ENCODE measurements at regions of chr7 and their contacts with region 1.

Region 1: GRCh38 chr7:44847508-44847920 is 373 bp downstream of the H2AZ2 start:
- DNase-seq: peak; percentile 81
- H3K4me3 Mint-ChIP-seq: peak overlapping the region; percentile 90
- H3K27ac Mint-ChIP-seq: peak overlapping the region; percentile 98
- H3K4me1 Mint-ChIP-seq: peaks cover 54% of the 10 kb centered on the region
- H3K27me3 Mint-ChIP-seq: no peaks in the 10 kb centered on the region

Region 2: GRCh38 chr7:44534501-44534900 is 313.0 kb before region 1 on chr7:
- intact Hi-C with region 1: no loop called
- DNase-seq: peak; percentile 28
- H3K4me3 Mint-ChIP-seq: no peak overlapping the region
- H3K27ac Mint-ChIP-seq: no peak overlapping the region
- H3K4me1 Mint-ChIP-seq: no peaks in the 10 kb centered on the region
- H3K27me3 Mint-ChIP-seq: no peaks in the 10 kb centered on the region

Region 3: GRCh38 chr7:44573464-44574286 is 273.8 kb before region 1 on chr7 and contains the start of gene DDX56:
- intact Hi-C with region 1: loop called (anchors 1 kb)
- DNase-seq: peak; percentile 93
- H3K4me3 Mint-ChIP-seq: peak within 1 kb of the TSS; percentile 88
- H3K27ac Mint-ChIP-seq: peak within 1 kb of the TSS; percentile 95
- H3K4me1 Mint-ChIP-seq: peaks cover 32% of the 10 kb centered on the region
- H3K27me3 Mint-ChIP-seq: no peaks in the 10 kb centered on the region
- total RNA-seq, gene DDX56: 165 and 166 TPM in 2 replicates

Region 4: DNA sequence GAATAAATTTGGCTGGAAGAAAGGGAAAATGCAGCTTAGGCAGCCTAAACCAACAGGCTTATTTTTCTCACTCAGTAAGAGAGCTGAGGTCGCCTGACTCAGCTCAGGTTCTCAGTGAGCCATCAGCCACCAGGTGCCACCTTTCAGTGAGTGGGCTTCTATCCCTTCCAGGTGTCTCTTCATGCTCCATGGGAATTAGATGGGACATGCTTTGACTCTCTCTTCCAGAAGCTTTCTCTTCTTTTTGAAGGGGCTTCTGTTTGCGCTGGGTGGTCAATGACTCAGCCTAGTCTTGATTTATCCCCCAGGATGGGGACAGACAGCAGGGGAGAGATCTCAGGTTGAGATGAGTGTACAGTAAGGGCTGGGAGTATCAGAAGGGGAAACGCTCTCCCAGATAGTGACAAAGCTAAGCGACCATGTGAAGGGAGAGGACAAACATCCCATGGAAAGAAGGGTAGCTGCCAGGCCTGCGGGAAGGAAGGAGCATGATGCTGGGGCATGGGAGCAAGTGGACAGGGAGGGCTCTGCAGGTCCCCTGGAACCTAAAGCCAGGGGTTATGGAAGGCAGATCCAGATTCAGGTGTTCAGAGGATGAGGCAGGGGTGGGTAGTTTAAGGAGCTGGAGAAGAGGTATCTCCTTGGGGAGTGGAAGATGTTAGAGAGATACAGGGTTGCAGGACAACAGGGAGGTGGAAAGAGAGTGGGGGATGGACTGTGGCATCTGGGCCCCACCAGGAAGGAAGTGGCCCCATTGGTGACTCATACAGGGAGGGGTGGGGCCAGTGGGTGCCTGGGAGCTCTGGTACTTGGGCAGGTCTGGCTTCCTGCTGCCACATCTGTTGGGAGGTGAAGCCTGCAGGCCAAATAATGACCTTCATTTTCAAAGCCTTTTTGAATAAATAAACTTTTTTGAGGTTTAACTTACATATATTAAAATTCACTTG is 208.6 kb before region 1 on chr7:
- intact Hi-C with region 1: loop called (anchors 1 kb)
- DNase-seq: peak; percentile 84
- H3K4me3 Mint-ChIP-seq: peak overlapping the region; percentile 82
- H3K27ac Mint-ChIP-seq: peak overlapping the region; percentile 100
- H3K4me1 Mint-ChIP-seq: peaks cover 81% of the 10 kb centered on the region
- H3K27me3 Mint-ChIP-seq: no peaks in the 10 kb centered on the region

Region 5: DNA sequence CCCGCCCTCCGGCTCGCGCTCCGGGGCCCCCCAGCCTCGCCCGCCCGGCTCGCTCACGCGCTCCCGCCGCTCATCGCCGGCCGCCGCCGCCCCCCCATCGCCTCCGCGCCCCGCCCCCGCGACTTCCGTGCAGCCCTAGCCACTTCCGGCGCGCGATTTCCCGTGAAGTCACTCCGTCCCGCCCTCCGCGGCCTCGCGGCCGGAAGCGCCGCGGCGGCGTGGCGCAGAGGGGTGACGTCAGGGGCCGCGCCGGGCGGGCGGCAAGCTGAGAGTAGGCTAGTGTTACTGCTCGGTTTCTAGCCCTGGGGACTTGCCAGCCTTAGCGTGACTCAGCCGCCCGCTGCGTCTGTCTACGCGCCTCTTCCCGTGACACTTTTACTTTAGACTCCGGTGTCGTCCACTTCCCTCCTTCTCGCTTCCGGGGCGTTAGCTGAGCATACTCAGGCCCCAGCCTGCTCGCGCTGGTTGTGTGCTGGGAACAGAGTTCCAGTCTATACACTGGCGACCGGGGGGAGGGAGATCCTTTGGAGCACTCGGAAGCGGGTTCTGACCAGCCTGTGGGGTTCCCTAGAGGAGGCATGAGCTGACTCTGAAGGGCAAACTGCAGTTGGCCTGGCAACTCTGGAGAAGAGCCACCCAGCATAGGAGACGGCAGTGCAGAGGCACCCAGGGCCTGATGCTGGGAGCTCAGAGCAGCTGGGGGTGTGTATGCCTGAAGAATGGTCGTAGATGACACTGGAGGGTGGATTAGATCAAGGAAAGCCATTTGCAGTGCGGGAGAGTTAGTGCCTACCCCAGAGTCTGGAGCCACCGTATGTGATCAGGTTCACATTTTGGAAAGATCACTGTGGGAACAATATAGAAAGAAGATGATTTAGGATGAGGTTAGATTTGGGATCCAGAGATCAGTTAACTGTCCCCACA is 38.1 kb after region 1 on chr7 and contains the start of gene PURB:
- intact Hi-C with region 1: loop called (anchors 1 kb)
- DNase-seq: peak; percentile 97
- H3K4me3 Mint-ChIP-seq: peak within 1 kb of the TSS; percentile 98
- H3K27ac Mint-ChIP-seq: peak within 1 kb of the TSS; percentile 100
- H3K4me1 Mint-ChIP-seq: peaks cover 67% of the 10 kb centered on the region
- H3K27me3 Mint-ChIP-seq: no peaks in the 10 kb centered on the region
- total RNA-seq, gene PURB: 42.1 and 42.6 TPM in 2 replicates

Region 6: GRCh38 chr7:44967571-44968446 is 120.3 kb after region 1 on chr7:
- intact Hi-C with region 1: no loop called
- DNase-seq: no peak
- H3K4me3 Mint-ChIP-seq: no peak overlapping the region
- H3K27ac Mint-ChIP-seq: peak overlapping the region; percentile 82
- H3K4me1 Mint-ChIP-seq: no peaks in the 10 kb centered on the region
- H3K27me3 Mint-ChIP-seq: no peaks in the 10 kb centered on the region

Region 7: DNA sequence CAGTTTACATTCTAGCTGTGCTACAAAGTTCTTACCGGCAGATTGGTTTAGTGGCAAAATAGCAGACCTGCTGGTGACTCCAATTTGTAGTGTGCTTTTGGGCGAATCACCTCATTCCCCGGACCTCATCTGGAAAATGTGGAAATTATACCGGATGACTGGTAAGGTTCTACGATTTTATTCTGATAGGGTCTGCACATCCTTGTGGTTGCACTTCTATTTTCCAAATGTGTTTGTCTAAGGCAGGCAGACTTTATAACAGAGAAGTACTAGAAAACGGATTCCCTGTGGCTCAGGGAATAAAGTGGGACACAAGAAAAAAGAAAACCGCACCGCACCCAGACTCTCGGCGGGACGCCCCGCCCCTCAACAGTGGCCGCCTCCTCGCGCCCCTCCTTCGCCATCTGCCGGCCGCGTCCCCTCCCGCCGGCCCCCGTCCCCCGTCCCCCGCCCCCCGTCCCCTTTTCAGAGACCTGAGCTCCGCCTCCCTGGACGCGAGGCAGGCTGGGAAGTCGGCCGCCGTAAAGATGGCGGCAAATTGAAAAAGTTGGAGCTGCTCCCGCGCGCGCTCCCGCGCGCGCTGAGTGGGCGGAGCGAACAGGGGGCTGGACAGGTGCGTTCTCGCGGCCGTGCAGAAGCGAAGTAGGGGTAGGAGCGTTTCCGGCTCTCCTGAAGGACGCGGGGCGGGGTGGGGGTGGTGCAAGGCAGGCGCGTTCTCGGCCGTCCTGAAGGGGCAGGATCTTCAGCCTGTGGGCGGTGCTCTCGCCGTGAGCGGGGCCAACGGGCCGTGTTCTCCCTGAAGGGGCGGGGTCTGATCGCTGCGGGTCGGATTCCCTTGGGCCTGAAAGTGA is 152.0 kb after region 1 on chr7:
- intact Hi-C with region 1: loop called (anchors 1 kb)
- DNase-seq: peak; percentile 99
- H3K4me3 Mint-ChIP-seq: peak overlapping the region; percentile 88
- H3K27ac Mint-ChIP-seq: peak overlapping the region; percentile 91
- H3K4me1 Mint-ChIP-seq: peaks cover 58% of the 10 kb centered on the region
- H3K27me3 Mint-ChIP-seq: no peaks in the 10 kb centered on the region

Measured in activated T-helper 1 cell treated with anti-CD3 and anti-CD28 coated beads, Interleukin-12 subunit alpha, Interleukin-12 subunit beta, Interleukin-2, Interleukin-4 antibody, amounts not matched to agents 30 ng/mL and 10 ng/mL and 1 ng/mL, durations not matched to agents 14 hours and 24 hours and 36 hours (primary cell).